OCI-LY7 (cell line): ENCODE measurements at regions of chr18 and their contacts with region 1.

Region 1: DNA sequence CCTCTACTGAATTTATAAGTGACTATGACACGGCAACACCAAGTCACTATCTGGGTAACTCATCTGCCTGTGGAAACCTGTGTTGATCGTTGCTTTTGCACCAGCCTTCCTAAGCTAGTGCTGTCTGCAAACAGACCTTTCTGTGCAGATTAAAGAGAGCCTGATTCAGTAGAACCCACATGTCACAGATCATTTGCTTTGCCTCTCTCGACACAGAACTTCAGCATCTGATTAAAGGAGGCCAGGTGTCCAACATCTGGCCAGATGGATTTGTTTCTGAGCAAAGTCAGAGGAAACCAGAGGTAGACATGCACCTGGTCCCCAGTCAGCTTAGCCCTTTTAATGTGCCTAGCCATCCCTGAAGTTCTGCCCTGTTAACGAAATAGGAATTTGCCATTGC is 15.0 kb upstream of the TTR start:
- DNase-seq: peak; percentile 92
- H3K4me3 ChIP-seq: peak overlapping the region; percentile 32
- H3K27ac ChIP-seq: peak overlapping the region; percentile 99
- H3K4me1 ChIP-seq: peaks cover 86% of the 10 kb centered on the region
- CTCF ChIP-seq: no peak

Region 2: GRCh38 chr18:31424383-31424988 is 152.2 kb before region 1 on chr18:
- CTCF ChIA-PET with region 1: no interaction called
- POLR2A ChIA-PET with region 1: no interaction called
- intact Hi-C with region 1: no loop called
- DNase-seq: peak; percentile 26
- H3K4me3 ChIP-seq: no peak overlapping the region
- H3K27ac ChIP-seq: no peak overlapping the region
- H3K4me1 ChIP-seq: no peaks in the 10 kb centered on the region
- CTCF ChIP-seq: peak; percentile 83

Region 3: DNA sequence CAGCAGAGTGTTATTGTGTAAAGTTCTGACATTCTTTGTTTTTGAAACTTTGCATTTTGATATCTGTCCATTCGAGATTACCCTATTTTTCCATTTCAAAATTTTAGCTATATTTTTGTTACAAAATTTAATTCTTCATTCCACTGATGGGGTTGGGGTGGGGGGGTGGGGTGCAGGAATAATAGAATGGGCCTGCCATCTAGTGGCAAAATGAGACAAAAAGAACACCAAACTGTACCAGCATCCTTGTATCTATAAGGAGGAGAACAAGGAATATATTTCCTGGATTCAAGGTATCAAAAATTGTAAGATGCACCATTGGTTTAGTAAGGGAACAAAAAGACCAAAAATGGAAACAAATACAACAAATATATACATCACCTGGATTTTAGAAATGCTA is 12.9 kb before region 1 on chr18:
- CTCF ChIA-PET with region 1: no interaction called
- POLR2A ChIA-PET with region 1: interaction called, 10 read pairs
- intact Hi-C with region 1: no loop called
- DNase-seq: no peak
- H3K4me3 ChIP-seq: no peak overlapping the region
- H3K27ac ChIP-seq: no peak overlapping the region
- H3K4me1 ChIP-seq: peaks cover 3% of the 10 kb centered on the region
- CTCF ChIP-seq: peak; percentile 40

Region 4: GRCh38 chr18:31626409-31626808 is 49.7 kb after region 1 on chr18:
- CTCF ChIA-PET with region 1: no interaction called
- POLR2A ChIA-PET with region 1: no interaction called
- intact Hi-C with region 1: no loop called
- DNase-seq: no peak
- H3K4me3 ChIP-seq: no peak overlapping the region
- H3K27ac ChIP-seq: no peak overlapping the region
- H3K4me1 ChIP-seq: no peaks in the 10 kb centered on the region
- CTCF ChIP-seq: peak; percentile 43; the same call in 1 of the 2 replicates